Activated CD8-positive, alpha-beta T cell treated with anti-CD3 and anti-CD28 coated beads, Interleukin-2, amount 10 ng/mL, durations not matched to agents 7 days and 5 days (primary cell): ENCODE measurements at regions of chr11 and their contacts with region 1.

Region 1: DNA sequence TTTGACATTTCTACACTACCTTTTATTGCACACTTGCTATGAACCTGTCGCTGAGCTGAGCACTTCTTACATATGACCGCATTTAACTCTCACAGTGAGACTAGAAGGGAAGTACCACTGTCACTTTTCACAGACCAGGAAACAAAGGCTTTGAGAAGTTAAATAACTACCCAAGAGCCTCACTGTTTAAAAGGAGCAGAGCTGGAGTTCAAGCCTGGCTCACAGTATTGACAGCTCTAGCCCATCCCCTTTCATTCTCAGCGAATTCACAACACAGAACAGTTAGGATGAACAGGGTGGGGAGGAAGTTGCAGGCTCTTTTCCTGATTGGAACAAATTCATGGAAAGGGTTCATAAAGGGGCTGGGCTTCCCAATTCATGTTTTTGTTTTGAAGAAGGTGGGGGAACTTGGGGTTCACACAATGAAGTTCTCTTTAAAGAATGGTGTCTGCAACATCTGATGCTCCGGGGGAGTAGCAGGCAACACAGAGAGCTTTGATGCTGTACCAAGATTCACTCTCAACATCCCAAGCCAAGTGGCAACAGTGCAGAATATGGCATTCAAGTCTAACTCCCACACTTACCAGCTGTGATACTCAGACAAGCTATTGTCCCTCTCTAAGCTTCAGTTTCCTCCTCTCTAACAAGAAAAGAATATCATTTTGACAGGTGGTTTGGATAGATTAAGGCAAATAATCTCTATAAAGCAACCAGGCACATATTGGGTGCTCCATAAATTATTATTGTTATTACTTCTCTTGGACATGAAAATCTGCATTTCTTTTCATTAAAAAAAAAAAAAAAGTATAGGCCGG is 17.2 kb downstream of the SCGB1A1 start:
- DNase-seq: no peak
- ATAC-seq: no peak
- H3K4me3 Mint-ChIP-seq: no peak overlapping the region
- H3K27ac Mint-ChIP-seq: no peak overlapping the region
- H3K4me1 Mint-ChIP-seq: peaks cover 39% of the 10 kb centered on the region
- H3K27me3 Mint-ChIP-seq: no peaks in the 10 kb centered on the region

Region 2: GRCh38 chr11:62411524-62411923 is 24.5 kb before region 1 on chr11:
- CTCF ChIA-PET with region 1: no interaction called
- POLR2A ChIA-PET with region 1: no interaction called
- DNase-seq: no peak
- ATAC-seq: no peak
- H3K4me3 Mint-ChIP-seq: no peak overlapping the region
- H3K27ac Mint-ChIP-seq: no peak overlapping the region
- H3K4me1 Mint-ChIP-seq: no peaks in the 10 kb centered on the region
- H3K27me3 Mint-ChIP-seq: peaks cover 2% of the 10 kb centered on the region

Region 3: GRCh38 chr11:62421996-62422395 is 14.1 kb before region 1 on chr11:
- CTCF ChIA-PET with region 1: interaction called, 24 read pairs
- POLR2A ChIA-PET with region 1: interaction called, 6 read pairs
- DNase-seq: no peak
- ATAC-seq: no peak
- H3K4me3 Mint-ChIP-seq: no peak overlapping the region
- H3K27ac Mint-ChIP-seq: peak overlapping the region; percentile 3
- H3K4me1 Mint-ChIP-seq: peaks cover 32% of the 10 kb centered on the region
- H3K27me3 Mint-ChIP-seq: peaks cover 15% of the 10 kb centered on the region

Region 4: DNA sequence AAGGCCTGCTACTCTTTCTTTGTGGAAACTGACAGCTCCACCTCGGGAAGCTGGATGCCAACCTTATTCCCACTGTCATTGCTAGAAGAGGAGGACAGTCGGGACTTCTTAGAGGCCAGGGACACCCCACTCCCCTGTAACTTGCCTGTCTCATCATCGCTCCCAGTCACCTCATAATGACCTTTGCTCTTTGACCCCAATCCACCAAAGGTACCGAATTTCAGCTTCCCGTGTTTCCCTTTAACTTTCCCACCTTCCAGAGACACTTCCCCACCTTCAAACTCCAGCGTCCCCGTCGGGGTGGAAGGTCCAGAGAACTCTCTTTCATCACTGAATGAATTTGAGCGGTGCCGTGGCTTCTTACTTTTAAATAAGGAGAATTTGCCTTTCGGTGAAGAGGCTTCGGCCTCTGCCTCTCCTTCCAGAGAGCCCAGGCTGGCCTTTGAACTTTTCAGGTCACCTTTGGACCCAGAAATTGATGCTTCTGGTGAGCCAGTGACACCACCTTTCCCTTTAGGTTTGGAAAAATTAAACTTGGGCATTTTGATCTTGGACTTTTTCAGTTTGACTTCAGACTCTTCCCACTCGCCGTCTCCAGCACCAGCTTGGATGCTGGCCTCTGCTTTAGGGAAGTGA is 80.8 kb after region 1 on chr11:
- CTCF ChIA-PET with region 1: no interaction called
- POLR2A ChIA-PET with region 1: no interaction called
- DNase-seq: no peak
- ATAC-seq: no peak
- H3K4me3 Mint-ChIP-seq: no peak overlapping the region
- H3K27ac Mint-ChIP-seq: no peak overlapping the region
- H3K4me1 Mint-ChIP-seq: no peaks in the 10 kb centered on the region
- H3K27me3 Mint-ChIP-seq: no peaks in the 10 kb centered on the region